Heart right ventricle (tissue), 16 donors: ENCODE measurements at regions of chr4 and their contacts with region 1.

Region 1: DNA sequence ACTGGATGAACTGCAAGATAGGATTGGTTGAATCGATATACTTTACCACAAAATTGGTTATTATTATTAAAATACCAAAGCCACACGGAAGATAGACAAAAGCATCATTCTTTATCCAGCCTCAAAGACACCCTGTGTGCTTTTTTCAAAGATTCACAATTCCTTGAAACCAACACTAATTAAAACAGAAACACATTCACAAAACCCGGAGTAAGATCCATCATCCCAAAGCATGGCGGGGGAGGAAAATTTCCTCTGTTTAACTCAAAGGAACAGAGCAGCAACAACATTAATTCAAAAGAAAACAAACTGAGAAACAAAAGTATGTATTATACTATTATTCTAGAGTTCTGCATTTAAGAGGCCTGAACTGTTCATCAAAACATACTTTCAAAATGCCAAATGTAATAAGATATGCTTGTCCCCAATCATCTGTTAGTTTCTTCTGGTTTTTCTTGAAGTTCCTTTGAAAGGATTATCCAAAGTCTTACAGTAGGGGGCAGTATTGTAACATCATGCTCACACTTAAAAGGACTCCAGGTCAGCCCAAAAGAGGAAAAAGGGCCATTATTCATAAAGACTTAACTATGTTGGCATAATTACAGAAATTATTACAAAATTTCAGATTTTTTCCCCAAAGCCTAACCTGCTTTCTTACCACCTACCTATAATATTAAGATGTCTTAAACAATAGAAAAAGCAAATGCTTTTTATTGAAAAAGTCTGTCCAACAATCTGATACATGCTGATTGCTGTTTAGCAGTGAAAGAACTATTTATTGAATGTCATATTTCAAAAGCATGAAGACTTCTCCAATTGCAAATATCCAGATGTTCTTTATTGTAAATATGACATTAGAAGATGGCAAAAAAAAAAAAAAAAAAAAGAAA is 168.7 kb downstream of the SCFD2 start:
- DNase-seq: no peak
- ATAC-seq: peak in 6 of 8 donors; percentile 56 to 75 (median 61)
- H3K4me3 ChIP-seq: no peak overlapping the region
- H3K27ac ChIP-seq: peak overlapping the region in 1 of 10 donors; percentile 37
- H3K4me1 ChIP-seq: peaks cover 0 to 16% (median 4%) of the 10 kb centered on the region in 9 donors
- H3K27me3 ChIP-seq: no peaks in the 10 kb centered on the region
- CTCF ChIP-seq: peak; percentile 65 to 85 (median 79)

Region 2: DNA sequence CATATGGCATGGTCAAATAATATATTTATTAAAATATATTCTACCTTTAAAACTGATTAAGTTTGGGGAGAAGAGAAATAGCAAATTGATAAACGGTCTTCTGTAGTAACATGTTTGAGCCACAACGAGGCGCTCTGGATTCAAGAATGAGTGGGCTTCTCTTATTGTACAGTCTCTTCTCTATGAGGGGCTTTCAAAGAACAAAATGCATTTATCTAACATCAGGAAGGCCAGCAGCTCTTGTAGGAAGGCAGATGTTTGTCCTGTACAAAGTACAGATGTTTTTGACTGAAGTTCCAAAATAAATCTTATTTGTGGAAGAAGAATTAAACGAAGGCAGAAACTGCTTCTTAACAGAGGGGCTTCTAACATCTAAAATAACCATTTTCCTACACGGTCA is 181.4 kb before region 1 on chr4:
- intact Hi-C with region 1: loop called in 5 of 10 experiments (anchors 5 to 10 kb)
- DNase-seq: peak in 1 of 2 donors; percentile 38
- ATAC-seq: peak in 1 of 8 donors; percentile 29
- H3K4me3 ChIP-seq: no peak overlapping the region
- H3K27ac ChIP-seq: no peak overlapping the region
- H3K4me1 ChIP-seq: peaks cover 6 to 70% (median 55%) of the 10 kb centered on the region in 9 donors
- H3K27me3 ChIP-seq: no peaks in the 10 kb centered on the region
- CTCF ChIP-seq: peak; percentile 35 to 80 (median 66)

Region 3: DNA sequence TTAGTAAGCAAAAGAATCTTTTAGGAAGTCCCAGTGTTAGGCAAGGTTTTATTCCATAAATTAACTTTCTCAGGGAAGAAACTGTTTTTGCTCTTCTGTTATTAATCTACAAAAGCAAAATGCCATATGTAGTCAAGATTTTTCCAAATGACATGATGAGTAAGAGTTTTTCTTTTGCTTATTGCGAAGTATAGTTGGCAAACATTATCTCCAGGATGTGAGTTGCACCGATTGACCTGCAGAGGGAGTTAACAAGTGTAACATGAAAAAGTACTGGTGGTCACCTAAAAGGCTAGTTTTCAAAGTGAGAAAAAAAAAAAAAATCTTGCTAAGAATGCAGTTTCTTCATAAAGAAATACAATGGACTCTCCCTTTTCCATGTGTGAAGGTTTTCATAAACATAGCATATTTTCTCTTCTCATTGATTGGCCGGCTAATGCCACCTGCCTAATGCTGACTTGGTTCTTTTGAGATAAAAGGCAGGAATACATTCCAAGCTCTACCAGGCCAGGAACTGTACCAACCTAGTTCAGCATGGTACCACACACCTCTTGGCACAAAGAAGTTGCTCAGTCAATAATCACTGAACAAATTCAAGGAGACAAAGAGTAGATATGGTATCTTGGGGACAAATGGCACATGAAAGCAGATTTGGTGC is 294.0 kb after region 1 on chr4:
- intact Hi-C with region 1: loop called in 1 of 10 experiments (anchors 10 kb)
- DNase-seq: peak in 1 of 2 donors; percentile 30
- ATAC-seq: peak in 6 of 8 donors; percentile 42 to 72 (median 52)
- H3K4me3 ChIP-seq: no peak overlapping the region
- H3K27ac ChIP-seq: peak overlapping the region in 4 of 10 donors; percentile 12 to 65 (median 25)
- H3K4me1 ChIP-seq: peaks cover 0 to 16% (median 8%) of the 10 kb centered on the region in 9 donors
- H3K27me3 ChIP-seq: peaks cover 0 to 5% (median 0%) of the 10 kb centered on the region in 7 donors
- CTCF ChIP-seq: peak; percentile 37 to 78 (median 71)

Region 4: DNA sequence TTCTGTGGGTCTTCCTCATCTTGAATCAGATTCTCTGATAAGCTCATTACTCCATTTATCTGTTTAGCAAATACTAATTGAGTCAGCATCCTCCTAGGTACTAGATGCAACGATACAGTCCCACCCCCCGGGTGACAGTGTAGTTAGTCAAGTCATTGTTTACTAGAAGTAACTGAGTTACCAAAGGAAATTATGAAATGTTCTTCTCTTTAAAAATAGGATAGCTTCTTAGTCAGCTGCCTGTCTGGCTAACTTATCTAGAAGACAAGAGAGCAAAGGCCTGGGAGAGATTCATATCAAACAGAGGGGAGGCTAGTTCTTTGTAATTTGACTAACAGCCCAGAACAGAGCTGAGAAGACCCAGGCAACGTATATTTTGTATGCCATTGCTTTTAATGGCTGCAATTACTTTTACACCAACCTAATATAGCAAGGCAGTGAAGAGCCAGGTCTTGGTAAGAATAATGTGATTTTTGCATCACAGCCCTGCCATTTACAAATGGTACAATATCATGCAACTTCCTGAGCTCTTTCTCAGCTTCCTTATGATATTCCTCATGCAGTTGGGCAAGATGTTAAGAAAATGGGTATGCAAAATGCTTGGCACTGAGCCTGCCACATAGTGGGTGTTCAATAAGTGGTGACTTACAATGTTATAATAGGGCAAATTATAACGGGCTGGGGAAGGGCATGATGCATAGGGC is 717.3 kb after region 1 on chr4:
- intact Hi-C with region 1: loop called in 5 of 10 experiments (anchors 10 kb)
- DNase-seq: no peak
- ATAC-seq: peak in 2 of 8 donors; percentile 13 to 32
- H3K4me3 ChIP-seq: no peak overlapping the region
- H3K27ac ChIP-seq: peak overlapping the region in 1 of 10 donors; percentile 21
- H3K4me1 ChIP-seq: peaks cover 0 to 39% (median 0%) of the 10 kb centered on the region in 9 donors
- H3K27me3 ChIP-seq: peaks cover 0 to 14% (median 0%) of the 10 kb centered on the region in 7 donors
- CTCF ChIP-seq: no peak

Region 5: GRCh38 chr4:54228056-54228527 is 1031.0 kb after region 1 on chr4:
- intact Hi-C with region 1: loop called in 7 of 10 experiments (anchors 5 kb)
- DNase-seq: peak; percentile 75 to 79
- ATAC-seq: peak; percentile 61 to 81 (median 68)
- H3K4me3 ChIP-seq: peak overlapping the region; percentile 4 to 64 (median 54)
- H3K27ac ChIP-seq: peak overlapping the region; percentile 6 to 85 (median 68)
- H3K4me1 ChIP-seq: peaks cover 5 to 74% (median 62%) of the 10 kb centered on the region in 9 donors
- H3K27me3 ChIP-seq: peaks cover 20 to 100% (median 98%) of the 10 kb centered on the region in 7 donors
- CTCF ChIP-seq: peak; percentile 49 to 87 (median 71)